B cell (primary cell): ENCODE measurements at regions of chr2 and their contacts with region 1.

Region 1: GRCh38 chr2:10382354-10383061 is 65.6 kb downstream of the ODC1 start:
- DNase-seq: peak; percentile 82
- ATAC-seq: peak; percentile 69
- H3K4me3 ChIP-seq: peak overlapping the region; percentile 12 to 68 (median 49)
- H3K4me3 Mint-ChIP-seq: peak overlapping the region; percentile 64
- H3K27ac ChIP-seq: peak overlapping the region; percentile 68 to 76
- H3K27ac Mint-ChIP-seq: peak overlapping the region; percentile 81
- H3K4me1 ChIP-seq: peaks cover 67 to 96% of the 10 kb centered on the region in 2 donors
- H3K4me1 Mint-ChIP-seq: peaks cover 86% of the 10 kb centered on the region
- H3K27me3 ChIP-seq: no peaks in the 10 kb centered on the region
- H3K27me3 Mint-ChIP-seq: no peaks in the 10 kb centered on the region
- CTCF ChIP-seq: no peak

Region 2: DNA sequence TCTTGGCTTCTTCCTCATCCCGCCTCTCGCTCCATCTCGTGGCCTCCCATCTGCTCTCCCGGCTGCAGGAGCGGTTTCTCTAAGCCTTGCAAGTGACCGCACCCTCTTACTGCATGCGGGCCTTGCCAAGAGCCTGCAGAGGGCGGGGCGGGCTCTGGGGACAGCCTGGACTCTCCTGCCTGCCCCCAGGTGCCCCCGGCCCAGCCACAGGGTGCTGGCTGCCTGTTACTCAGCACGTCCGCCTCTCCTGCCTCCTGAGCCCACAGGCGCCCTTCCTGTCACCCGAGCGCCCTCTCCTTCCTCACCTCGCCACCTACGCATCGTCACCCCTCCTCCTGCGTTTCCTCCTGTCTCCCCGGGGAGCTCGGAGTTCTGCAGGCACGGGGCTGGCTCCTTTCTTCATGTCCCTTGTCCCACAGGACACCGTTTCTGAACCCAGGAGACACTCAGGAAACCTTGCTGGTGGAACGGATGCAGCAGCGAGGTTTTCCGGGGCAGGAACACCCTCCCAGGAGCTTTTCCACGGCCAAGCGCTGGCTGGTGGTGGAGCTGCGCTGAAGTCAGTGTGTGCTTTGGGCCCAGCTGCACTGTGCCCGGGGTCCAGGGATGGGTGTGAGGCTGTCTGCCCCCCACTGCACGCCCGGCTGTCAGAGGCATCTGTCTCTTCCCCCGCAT is 51.3 kb before region 1 on chr2:
- CTCF ChIA-PET with region 1: interaction called, 7 read pairs
- POLR2A ChIA-PET with region 1: interaction called, 5 read pairs
- intact Hi-C with region 1: loop called (anchors 2 kb)
- DNase-seq: peak; percentile 65
- ATAC-seq: peak; percentile 38
- H3K4me3 ChIP-seq: peak overlapping the region; percentile 3 to 57 (median 52)
- H3K4me3 Mint-ChIP-seq: peak overlapping the region; percentile 70
- H3K27ac ChIP-seq: peak overlapping the region; percentile 58 to 82
- H3K27ac Mint-ChIP-seq: peak overlapping the region; percentile 81
- H3K4me1 ChIP-seq: peaks cover 55 to 69% of the 10 kb centered on the region in 2 donors
- H3K4me1 Mint-ChIP-seq: peaks cover 74% of the 10 kb centered on the region
- H3K27me3 ChIP-seq: no peaks in the 10 kb centered on the region
- H3K27me3 Mint-ChIP-seq: no peaks in the 10 kb centered on the region
- CTCF ChIP-seq: no peak

Region 3: GRCh38 chr2:10369269-10370255 is 12.9 kb before region 1 on chr2:
- CTCF ChIA-PET with region 1: no interaction called
- POLR2A ChIA-PET with region 1: no interaction called
- intact Hi-C with region 1: no loop called
- DNase-seq: no peak
- ATAC-seq: no peak
- H3K4me3 ChIP-seq: no peak overlapping the region
- H3K4me3 Mint-ChIP-seq: no peak overlapping the region
- H3K27ac ChIP-seq: no peak overlapping the region
- H3K27ac Mint-ChIP-seq: peak overlapping the region; percentile 73
- H3K4me1 ChIP-seq: peaks cover 3 to 21% of the 10 kb centered on the region in 2 donors
- H3K4me1 Mint-ChIP-seq: peaks cover 49% of the 10 kb centered on the region
- H3K27me3 ChIP-seq: no peaks in the 10 kb centered on the region
- H3K27me3 Mint-ChIP-seq: no peaks in the 10 kb centered on the region
- CTCF ChIP-seq: no peak

Region 4: GRCh38 chr2:10414000-10414451 is 31.5 kb after region 1 on chr2:
- CTCF ChIA-PET with region 1: interaction called, 178 read pairs
- POLR2A ChIA-PET with region 1: interaction called, 72 read pairs
- intact Hi-C with region 1: loop called (anchors 1 kb)
- DNase-seq: peak; percentile 49
- ATAC-seq: no peak
- H3K4me3 ChIP-seq: no peak overlapping the region
- H3K4me3 Mint-ChIP-seq: no peak overlapping the region
- H3K27ac ChIP-seq: no peak overlapping the region
- H3K27ac Mint-ChIP-seq: peak overlapping the region; percentile 63
- H3K4me1 ChIP-seq: peaks cover 32 to 70% of the 10 kb centered on the region in 2 donors
- H3K4me1 Mint-ChIP-seq: peaks cover 60% of the 10 kb centered on the region
- H3K27me3 ChIP-seq: no peaks in the 10 kb centered on the region
- H3K27me3 Mint-ChIP-seq: no peaks in the 10 kb centered on the region
- CTCF ChIP-seq: no peak

Region 5: GRCh38 chr2:10504994-10505820 is 122.7 kb after region 1 on chr2:
- CTCF ChIA-PET with region 1: no interaction called
- POLR2A ChIA-PET with region 1: no interaction called
- intact Hi-C with region 1: no loop called
- DNase-seq: no peak
- ATAC-seq: no peak
- H3K4me3 ChIP-seq: no peak overlapping the region
- H3K4me3 Mint-ChIP-seq: no peak overlapping the region
- H3K27ac ChIP-seq: no peak overlapping the region
- H3K27ac Mint-ChIP-seq: no peak overlapping the region
- H3K4me1 ChIP-seq: no peaks in the 10 kb centered on the region
- H3K4me1 Mint-ChIP-seq: no peaks in the 10 kb centered on the region
- H3K27me3 ChIP-seq: peaks cover 0 to 7% (median 0%) of the 10 kb centered on the region in 4 experiments
- H3K27me3 Mint-ChIP-seq: peaks cover 15% of the 10 kb centered on the region
- CTCF ChIP-seq: no peak

Region 6: DNA sequence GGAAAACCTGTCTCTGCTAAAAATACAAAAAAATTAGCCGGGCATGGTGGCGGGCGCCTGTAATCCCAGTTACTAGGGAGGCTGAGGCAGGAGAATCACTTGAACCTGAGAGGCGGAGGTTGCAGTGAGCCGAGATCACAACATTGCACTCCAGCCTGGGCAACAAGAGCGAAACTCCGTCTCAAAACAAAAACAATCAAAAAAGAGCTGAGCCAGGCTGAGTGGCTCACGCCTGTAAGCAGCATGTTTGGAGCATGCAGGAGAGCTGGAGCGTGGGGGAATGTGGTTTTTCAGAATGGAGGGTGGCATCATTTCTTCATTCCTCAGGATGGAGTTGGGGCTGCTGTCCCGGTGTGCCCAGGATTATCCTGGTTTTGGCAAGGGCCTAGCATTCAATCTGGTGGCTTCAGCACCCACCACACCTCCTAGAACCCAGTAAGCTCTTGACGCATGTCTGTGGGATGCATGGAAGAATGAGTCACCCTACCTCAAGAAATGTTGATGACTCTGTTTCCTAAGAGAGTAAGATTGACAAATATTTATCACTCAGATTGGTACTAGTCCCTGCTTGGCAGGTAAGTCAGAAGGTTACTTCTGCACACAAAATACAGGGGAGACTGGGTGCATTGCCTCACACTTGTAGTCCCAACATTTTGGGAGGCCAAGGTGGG is 155.9 kb after region 1 on chr2:
- CTCF ChIA-PET with region 1: no interaction called
- POLR2A ChIA-PET with region 1: no interaction called
- intact Hi-C with region 1: no loop called
- DNase-seq: no peak
- ATAC-seq: no peak
- H3K4me3 ChIP-seq: no peak overlapping the region
- H3K4me3 Mint-ChIP-seq: no peak overlapping the region
- H3K27ac ChIP-seq: no peak overlapping the region
- H3K27ac Mint-ChIP-seq: no peak overlapping the region
- H3K4me1 ChIP-seq: no peaks in the 10 kb centered on the region
- H3K4me1 Mint-ChIP-seq: peaks cover 9% of the 10 kb centered on the region
- H3K27me3 ChIP-seq: peaks cover 0 to 3% (median under 1%) of the 10 kb centered on the region in 4 experiments
- H3K27me3 Mint-ChIP-seq: peaks cover 22% of the 10 kb centered on the region
- CTCF ChIP-seq: no peak

Region 7: GRCh38 chr2:10634495-10634894 is 252.0 kb after region 1 on chr2:
- CTCF ChIA-PET with region 1: no interaction called
- POLR2A ChIA-PET with region 1: no interaction called
- intact Hi-C with region 1: no loop called
- DNase-seq: no peak
- ATAC-seq: no peak
- H3K4me3 ChIP-seq: no peak overlapping the region
- H3K4me3 Mint-ChIP-seq: no peak overlapping the region
- H3K27ac ChIP-seq: no peak overlapping the region
- H3K27ac Mint-ChIP-seq: no peak overlapping the region
- H3K4me1 ChIP-seq: no peaks in the 10 kb centered on the region
- H3K4me1 Mint-ChIP-seq: no peaks in the 10 kb centered on the region
- H3K27me3 ChIP-seq: no peaks in the 10 kb centered on the region
- H3K27me3 Mint-ChIP-seq: no peaks in the 10 kb centered on the region
- CTCF ChIP-seq: no peak